Transverse colon (tissue), 4 donors: ENCODE measurements at regions of chrX and their contacts with region 1.

Region 1: DNA sequence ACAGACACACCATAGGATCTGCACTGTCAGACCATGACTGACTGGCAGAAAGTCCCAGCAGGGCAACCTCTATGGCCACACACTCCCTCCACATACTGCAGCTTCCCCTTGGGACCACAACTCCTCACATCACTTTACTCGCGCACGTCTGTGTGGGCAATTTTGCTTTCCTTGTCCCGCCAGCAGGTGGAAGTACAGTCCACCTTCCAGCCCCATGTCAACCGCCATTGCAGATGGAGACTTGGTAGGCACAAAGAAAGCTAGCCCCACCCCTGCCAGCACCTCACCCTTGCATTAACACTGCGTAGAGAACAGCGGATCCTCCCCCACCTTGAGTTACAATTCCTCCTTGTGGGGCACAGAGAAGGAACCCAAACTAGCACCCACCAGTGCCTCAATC is 74.4 kb upstream of the NAP1L2 start:
- DNase-seq: no peak
- H3K4me3 ChIP-seq: no peak overlapping the region
- H3K27ac ChIP-seq: no peak overlapping the region
- H3K4me1 ChIP-seq: no peaks in the 10 kb centered on the region
- H3K27me3 ChIP-seq: no peaks in the 10 kb centered on the region
- CTCF ChIP-seq: no peak
- EP300 ChIP-seq: no peak
- POLR2A ChIP-seq: no peak

Region 2: GRCh38 chrX:72576141-72576896 is 712.7 kb before region 1 on chrX:
- in situ Hi-C with region 1: no loop called
- intact Hi-C with region 1: no loop called
- DNase-seq: no peak
- H3K4me3 ChIP-seq: no peak overlapping the region
- H3K27ac ChIP-seq: no peak overlapping the region
- H3K4me1 ChIP-seq: peaks cover 0 to 5% (median 0%) of the 10 kb centered on the region in 4 donors
- H3K27me3 ChIP-seq: no peaks in the 10 kb centered on the region
- CTCF ChIP-seq: no peak
- EP300 ChIP-seq: no peak
- POLR2A ChIP-seq: no peak

Region 3: DNA sequence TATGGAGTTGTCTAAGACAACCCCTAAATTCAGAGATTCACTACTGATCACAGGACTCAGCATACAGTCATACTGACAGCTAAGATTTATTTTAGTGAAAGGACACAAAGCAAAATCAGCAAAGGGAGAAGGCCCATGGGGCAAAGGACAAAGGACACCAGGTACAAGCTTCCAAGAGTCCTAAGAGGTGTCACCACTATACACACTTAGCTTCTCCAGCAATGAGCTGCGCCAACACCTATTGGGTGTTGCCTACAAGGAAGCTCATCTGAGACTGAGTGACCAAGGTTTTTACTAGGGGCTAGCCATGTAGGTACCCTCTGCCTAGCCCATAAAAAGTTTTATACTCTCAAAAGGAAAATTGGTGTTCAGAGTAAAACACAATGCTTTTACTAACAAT is 154.3 kb before region 1 on chrX:
- in situ Hi-C with region 1: no loop called
- intact Hi-C with region 1: no loop called
- DNase-seq: no peak
- H3K4me3 ChIP-seq: no peak overlapping the region
- H3K27ac ChIP-seq: no peak overlapping the region
- H3K4me1 ChIP-seq: no peaks in the 10 kb centered on the region
- H3K27me3 ChIP-seq: no peaks in the 10 kb centered on the region
- CTCF ChIP-seq: no peak
- EP300 ChIP-seq: no peak
- POLR2A ChIP-seq: no peak

Region 4: DNA sequence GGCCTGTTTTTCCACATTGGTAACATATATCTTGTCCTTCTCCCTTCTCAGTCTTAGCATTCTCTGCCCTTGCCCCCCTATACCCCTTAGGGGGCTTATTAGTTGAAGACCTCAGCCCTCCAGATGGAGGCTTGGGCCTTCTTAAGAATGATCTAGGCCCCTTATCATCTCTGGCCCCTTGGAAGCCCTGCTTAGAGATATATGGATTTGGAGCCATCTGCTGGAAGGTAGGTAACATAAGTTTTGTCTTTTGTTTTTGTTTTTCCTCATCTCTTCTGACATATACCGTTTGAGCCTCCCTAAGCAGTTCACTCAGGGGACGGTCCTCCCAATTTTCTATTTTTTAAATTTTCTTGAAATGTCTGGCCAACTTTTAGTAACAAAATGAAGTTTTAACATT is 26.0 kb before region 1 on chrX:
- in situ Hi-C with region 1: no loop called
- intact Hi-C with region 1: no loop called
- DNase-seq: no peak
- H3K4me3 ChIP-seq: no peak overlapping the region
- H3K27ac ChIP-seq: no peak overlapping the region
- H3K4me1 ChIP-seq: no peaks in the 10 kb centered on the region
- H3K27me3 ChIP-seq: no peaks in the 10 kb centered on the region
- CTCF ChIP-seq: peak; percentile 10 to 35 (median 26)
- EP300 ChIP-seq: no peak
- POLR2A ChIP-seq: no peak

Region 5: DNA sequence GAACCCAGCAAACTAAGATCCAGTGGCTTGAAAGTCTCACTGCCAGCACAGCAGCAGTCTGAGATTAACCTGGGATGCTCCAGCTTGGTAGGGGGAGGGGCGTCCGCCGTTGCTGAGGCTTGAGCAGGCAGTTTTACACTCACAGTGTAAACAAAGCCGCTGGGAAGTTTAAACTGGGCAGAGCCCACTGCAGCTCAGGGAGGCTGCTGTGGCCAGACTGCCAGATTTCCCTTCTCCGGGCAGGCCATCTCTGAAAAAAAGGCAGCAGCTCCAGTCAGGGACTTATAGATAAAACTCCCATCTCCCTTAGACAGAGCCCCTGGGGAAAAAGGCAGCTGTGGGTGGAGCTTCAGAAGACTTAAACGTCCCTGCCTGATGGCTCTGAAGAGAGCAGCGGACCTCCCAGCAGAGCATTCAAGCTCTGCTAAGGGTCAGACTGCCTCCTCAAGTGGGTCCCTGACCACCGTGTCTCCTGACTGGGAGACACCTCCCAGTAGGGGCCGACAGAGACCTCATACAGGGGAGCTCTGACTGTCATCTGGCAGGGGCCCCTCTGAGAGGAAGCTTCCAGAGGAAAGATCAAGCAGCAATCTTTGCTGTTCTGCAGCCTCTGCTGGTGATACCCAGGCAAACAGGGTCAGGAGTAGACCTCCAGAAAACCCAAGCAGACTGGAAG is 112.7 kb after region 1 on chrX:
- in situ Hi-C with region 1: loop called in 1 of 4 experiments (anchors 25 kb)
- intact Hi-C with region 1: no loop called
- DNase-seq: no peak
- H3K4me3 ChIP-seq: no peak overlapping the region
- H3K27ac ChIP-seq: no peak overlapping the region
- H3K4me1 ChIP-seq: no peaks in the 10 kb centered on the region
- H3K27me3 ChIP-seq: no peaks in the 10 kb centered on the region
- CTCF ChIP-seq: no peak
- EP300 ChIP-seq: no peak
- POLR2A ChIP-seq: no peak

Region 6: GRCh38 chrX:73524906-73525305 is 235.9 kb after region 1 on chrX:
- in situ Hi-C with region 1: no loop called
- intact Hi-C with region 1: no loop called
- DNase-seq: no peak
- H3K4me3 ChIP-seq: no peak overlapping the region
- H3K27ac ChIP-seq: no peak overlapping the region
- H3K4me1 ChIP-seq: no peaks in the 10 kb centered on the region
- H3K27me3 ChIP-seq: no peaks in the 10 kb centered on the region
- CTCF ChIP-seq: no peak
- EP300 ChIP-seq: no peak
- POLR2A ChIP-seq: no peak